ENCODE measurements at regions of chr1 and their contacts with region 1.

Region 1: DNA sequence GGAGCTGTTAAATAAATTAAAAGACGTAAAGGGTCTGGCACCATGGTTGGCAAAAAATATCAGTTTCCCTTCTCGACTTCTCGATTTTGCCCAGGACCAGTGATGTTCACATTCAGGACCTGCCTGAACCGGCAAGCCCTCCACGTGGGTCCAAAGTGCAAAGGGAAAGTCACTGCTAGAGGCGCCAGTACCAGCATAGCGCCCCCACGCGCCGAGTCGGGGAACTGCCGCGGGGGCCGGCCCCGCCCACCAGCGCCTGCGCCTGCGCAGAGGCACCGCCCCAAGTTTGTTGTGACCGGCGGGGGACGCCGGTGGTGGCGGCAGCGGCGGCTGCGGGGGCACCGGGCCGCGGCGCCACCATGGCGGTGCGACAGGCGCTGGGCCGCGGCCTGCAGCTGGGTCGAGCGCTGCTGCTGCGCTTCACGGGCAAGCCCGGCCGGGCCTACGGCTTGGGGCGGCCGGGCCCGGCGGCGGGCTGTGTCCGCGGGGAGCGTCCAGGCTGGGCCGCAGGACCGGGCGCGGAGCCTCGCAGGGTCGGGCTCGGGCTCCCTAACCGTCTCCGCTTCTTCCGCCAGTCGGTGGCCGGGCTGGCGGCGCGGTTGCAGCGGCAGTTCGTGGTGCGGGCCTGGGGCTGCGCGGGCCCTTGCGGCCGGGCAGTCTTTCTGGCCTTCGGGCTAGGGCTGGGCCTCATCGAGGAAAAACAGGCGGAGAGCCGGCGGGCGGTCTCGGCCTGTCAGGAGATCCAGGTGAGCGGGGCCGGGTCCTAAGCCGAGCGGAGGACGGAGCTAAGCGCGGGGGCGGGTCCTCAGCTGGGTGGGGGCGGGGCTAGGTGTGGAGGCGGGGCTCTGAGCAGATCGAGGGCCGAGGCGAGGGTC is at the start of gene PINK1:
- DNase-seq: peak; percentile 71
- H3K4me3 Mint-ChIP-seq: peak within 1 kb of the TSS; percentile 77
- H3K27ac Mint-ChIP-seq: peak within 1 kb of the TSS; percentile 69
- H3K4me1 Mint-ChIP-seq: peaks cover 12% of the 10 kb centered on the region
- H3K27me3 Mint-ChIP-seq: no peaks in the 10 kb centered on the region
- CTCF ChIP-seq: peak; percentile 99
- total RNA-seq, gene PINK1: 20.9 and 26.1 TPM in 2 replicates

Region 2: GRCh38 chr1:20507564-20508410 is 125.6 kb before region 1 on chr1 and contains the start of gene MUL1:
- CTCF ChIA-PET with region 1: interaction called, 4 read pairs
- POLR2A ChIA-PET with region 1: interaction called, 13 read pairs
- intact Hi-C with region 1: no loop called
- DNase-seq: peak; percentile 90
- H3K4me3 Mint-ChIP-seq: peak within 1 kb of the TSS; percentile 89
- H3K27ac Mint-ChIP-seq: peak within 1 kb of the TSS; percentile 98
- H3K4me1 Mint-ChIP-seq: peaks cover 11% of the 10 kb centered on the region
- H3K27me3 Mint-ChIP-seq: no peaks in the 10 kb centered on the region
- CTCF ChIP-seq: no peak
- total RNA-seq, gene MUL1: 23.4 and 29.9 TPM in 2 replicates

Region 3: GRCh38 chr1:20574686-20575540 is 58.5 kb before region 1 on chr1:
- CTCF ChIA-PET with region 1: interaction called, 28 read pairs
- POLR2A ChIA-PET with region 1: interaction called, 9 read pairs
- intact Hi-C with region 1: loop called (anchors 1 kb)
- DNase-seq: peak; percentile 91
- H3K4me3 Mint-ChIP-seq: no peak overlapping the region
- H3K27ac Mint-ChIP-seq: no peak overlapping the region
- H3K4me1 Mint-ChIP-seq: no peaks in the 10 kb centered on the region
- H3K27me3 Mint-ChIP-seq: peaks cover 14% of the 10 kb centered on the region
- CTCF ChIP-seq: peak; percentile 76

Region 4: GRCh38 chr1:20614130-20614580 is 19.3 kb before region 1 on chr1:
- CTCF ChIA-PET with region 1: interaction called, 21 read pairs
- POLR2A ChIA-PET with region 1: interaction called, 41 read pairs
- intact Hi-C with region 1: no loop called
- DNase-seq: no peak
- H3K4me3 Mint-ChIP-seq: no peak overlapping the region
- H3K27ac Mint-ChIP-seq: peak overlapping the region; percentile 91
- H3K4me1 Mint-ChIP-seq: peaks cover 22% of the 10 kb centered on the region
- H3K27me3 Mint-ChIP-seq: no peaks in the 10 kb centered on the region
- CTCF ChIP-seq: no peak

Measured in MCF 10A (cell line).